Calu3 (cell line): ENCODE measurements at regions of chr5 and their contacts with region 1.

Region 1: DNA sequence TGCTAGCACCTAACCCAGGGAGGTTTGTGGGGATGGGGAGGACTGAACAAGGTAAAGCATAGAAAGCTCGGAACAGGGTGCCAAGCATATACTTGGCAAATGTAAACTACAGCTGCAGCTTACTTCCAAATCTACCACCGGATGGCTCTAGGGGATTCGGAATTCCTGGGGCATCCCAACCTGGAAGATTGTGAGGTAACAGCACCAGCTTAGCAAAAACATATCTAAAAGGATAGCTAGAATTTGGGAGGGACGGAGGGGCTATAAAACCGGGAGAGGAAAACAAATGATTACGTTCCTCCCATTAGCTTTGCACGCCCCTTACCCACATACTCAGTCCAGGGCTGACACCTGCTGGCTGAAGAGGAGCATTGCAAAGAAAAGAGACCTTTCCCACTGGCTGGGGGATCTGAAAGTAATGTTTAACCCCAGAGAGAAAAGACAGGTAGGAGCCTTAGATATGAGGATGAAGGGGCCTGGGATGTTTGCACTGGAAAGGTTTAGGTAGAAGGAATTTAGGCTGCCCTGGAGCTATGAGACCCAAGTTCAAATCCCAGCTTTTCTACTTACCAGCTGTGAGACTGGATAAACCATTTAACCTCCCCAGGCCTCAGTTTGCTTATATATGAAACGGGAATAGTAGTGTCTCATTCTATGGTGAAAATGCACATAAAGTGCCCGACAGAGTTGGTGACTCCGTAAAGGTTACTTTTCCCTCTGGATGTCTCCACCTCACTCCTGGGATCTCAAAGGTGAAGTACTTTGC is 73.6 kb downstream of the FAM114A2 start:
- DNase-seq: peak; percentile 73
- H3K4me3 Mint-ChIP-seq: no peak overlapping the region
- H3K27ac Mint-ChIP-seq: no peak overlapping the region
- H3K4me1 Mint-ChIP-seq: no peaks in the 10 kb centered on the region
- H3K27me3 Mint-ChIP-seq: peaks cover 55% of the 10 kb centered on the region
- CTCF ChIP-seq: peak; percentile 96

Region 2: DNA sequence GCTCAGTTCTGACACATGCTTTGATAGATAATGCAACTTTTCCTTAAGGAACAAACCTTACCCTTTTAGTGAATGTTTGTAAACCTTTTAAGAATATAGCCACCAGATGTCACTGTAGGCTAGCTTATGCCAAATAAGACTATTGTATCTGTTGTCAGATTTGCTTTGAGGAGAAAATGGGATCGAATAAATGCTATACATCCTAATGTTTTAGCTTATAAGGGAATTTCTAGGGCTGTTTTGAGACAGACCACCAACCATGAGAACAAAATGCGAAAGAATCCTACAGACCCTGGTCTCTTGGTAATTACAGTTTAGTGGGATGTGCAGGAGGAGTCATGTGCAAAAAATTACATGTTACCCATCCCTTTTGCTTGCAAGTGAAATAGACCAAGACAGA is 1432.3 kb before region 1 on chr5:
- CTCF ChIA-PET with region 1: interaction called, 10 read pairs
- intact Hi-C with region 1: loop called (anchors 1 kb)
- DNase-seq: peak; percentile 34
- H3K4me3 Mint-ChIP-seq: no peak overlapping the region
- H3K27ac Mint-ChIP-seq: no peak overlapping the region
- H3K4me1 Mint-ChIP-seq: no peaks in the 10 kb centered on the region
- H3K27me3 Mint-ChIP-seq: peaks cover 41% of the 10 kb centered on the region
- CTCF ChIP-seq: peak; percentile 61

Region 3: DNA sequence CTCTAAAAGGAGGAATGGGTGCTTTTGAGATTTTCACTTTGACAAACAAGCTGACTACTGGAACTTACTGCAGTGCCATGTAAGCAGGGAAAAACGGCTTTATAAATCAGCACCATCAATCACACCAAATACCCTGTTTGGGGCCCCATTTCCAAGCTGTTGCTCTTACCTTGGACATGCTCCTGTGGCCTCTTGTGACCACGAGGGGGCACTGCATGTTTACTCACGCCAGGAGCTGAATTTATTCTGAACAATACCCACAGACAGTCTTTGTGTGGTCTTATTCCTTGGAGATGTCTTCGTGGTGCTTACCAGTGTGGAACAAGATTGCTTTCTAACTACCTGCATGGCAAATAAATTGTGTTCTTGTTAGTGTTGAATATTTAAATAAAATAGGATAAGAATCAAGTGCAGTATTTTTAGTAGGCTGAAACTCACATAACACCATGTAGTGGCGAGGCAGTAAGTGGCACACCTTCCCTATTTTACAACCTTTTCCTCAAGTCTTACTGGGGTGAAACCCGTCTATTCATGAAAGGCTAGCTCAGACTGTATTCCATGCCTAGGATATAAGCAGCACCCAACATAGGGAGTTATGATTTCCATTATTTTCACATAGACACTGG is 1404.4 kb before region 1 on chr5:
- CTCF ChIA-PET with region 1: interaction called, 9 read pairs
- intact Hi-C with region 1: loop called (anchors 1 kb)
- DNase-seq: peak; percentile 75
- H3K4me3 Mint-ChIP-seq: no peak overlapping the region
- H3K27ac Mint-ChIP-seq: no peak overlapping the region
- H3K4me1 Mint-ChIP-seq: no peaks in the 10 kb centered on the region
- H3K27me3 Mint-ChIP-seq: peaks cover 21% of the 10 kb centered on the region
- CTCF ChIP-seq: peak; percentile 85

Region 4: DNA sequence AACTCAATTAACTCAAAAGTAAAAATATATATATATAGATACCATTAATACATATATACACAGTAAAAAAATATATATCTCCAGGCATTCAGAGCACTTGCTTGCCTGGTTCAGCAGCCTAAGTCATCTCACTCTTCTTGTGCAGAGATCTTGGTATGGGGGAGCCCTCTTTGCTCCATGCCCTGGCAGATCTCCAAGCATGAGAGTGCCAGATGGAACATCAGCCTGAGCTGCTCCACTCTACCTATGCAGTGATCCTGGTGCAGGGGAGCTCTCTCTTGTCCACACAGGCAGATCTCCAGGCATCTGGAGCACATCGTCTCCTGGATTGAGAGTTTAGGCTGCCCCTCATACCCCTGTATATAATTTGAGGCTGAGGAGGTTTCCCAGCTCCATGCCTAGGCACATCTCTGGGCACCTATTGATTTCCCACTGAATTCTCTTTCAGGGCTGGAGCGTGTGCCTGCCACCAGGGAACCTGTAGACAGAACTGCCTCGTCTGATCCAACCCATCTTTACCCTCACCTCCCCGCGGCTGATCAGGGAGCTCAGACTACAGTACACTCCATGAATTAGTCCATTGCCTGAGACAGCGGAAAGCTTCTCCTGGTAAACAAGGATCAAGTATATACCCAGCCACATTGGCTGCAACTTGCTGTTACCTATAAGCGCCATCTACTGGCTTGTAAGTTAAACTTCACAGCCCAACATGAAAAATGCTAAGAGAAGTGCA is 817.0 kb before region 1 on chr5:
- CTCF ChIA-PET with region 1: interaction called, 4 read pairs
- intact Hi-C with region 1: loop called (anchors 2 kb)
- DNase-seq: peak; percentile 15
- H3K4me3 Mint-ChIP-seq: no peak overlapping the region
- H3K27ac Mint-ChIP-seq: no peak overlapping the region
- H3K4me1 Mint-ChIP-seq: no peaks in the 10 kb centered on the region
- H3K27me3 Mint-ChIP-seq: no peaks in the 10 kb centered on the region
- CTCF ChIP-seq: peak; percentile 54

Region 5: GRCh38 chr5:153480401-153480800 is 484.7 kb before region 1 on chr5:
- CTCF ChIA-PET with region 1: no interaction called
- intact Hi-C with region 1: no loop called
- DNase-seq: no peak
- H3K4me3 Mint-ChIP-seq: no peak overlapping the region
- H3K27ac Mint-ChIP-seq: no peak overlapping the region
- H3K4me1 Mint-ChIP-seq: no peaks in the 10 kb centered on the region
- H3K27me3 Mint-ChIP-seq: peaks cover 19% of the 10 kb centered on the region
- CTCF ChIP-seq: no peak

Region 6: DNA sequence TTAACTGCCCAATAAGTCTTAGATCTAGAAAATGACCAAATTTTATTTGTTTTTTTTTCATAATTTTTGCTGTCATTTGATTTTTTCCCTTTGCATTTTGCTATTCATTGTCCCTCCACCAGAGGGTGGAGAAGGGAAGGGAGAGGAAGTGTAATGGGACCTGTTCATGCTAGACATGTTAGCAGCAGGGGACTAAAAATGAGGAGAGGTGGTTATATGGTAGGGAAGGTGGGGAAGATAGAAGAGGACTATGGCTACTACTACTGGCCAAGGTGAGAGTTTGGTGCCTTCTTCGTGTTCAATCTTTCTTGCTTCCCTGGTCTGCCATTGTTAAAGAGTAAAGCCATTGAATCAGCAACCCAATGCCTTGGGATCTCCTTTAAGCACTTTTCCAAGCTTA is 468.2 kb before region 1 on chr5:
- CTCF ChIA-PET with region 1: interaction called, 17 read pairs
- intact Hi-C with region 1: loop called (anchors 1 kb)
- DNase-seq: peak; percentile 36
- H3K4me3 Mint-ChIP-seq: no peak overlapping the region
- H3K27ac Mint-ChIP-seq: no peak overlapping the region
- H3K4me1 Mint-ChIP-seq: no peaks in the 10 kb centered on the region
- H3K27me3 Mint-ChIP-seq: peaks cover 64% of the 10 kb centered on the region
- CTCF ChIP-seq: peak; percentile 57

Region 7: GRCh38 chr5:153601377-153601776 is 363.7 kb before region 1 on chr5:
- CTCF ChIA-PET with region 1: no interaction called
- intact Hi-C with region 1: no loop called
- DNase-seq: no peak
- H3K4me3 Mint-ChIP-seq: no peak overlapping the region
- H3K27ac Mint-ChIP-seq: no peak overlapping the region
- H3K4me1 Mint-ChIP-seq: no peaks in the 10 kb centered on the region
- H3K27me3 Mint-ChIP-seq: peaks cover 29% of the 10 kb centered on the region
- CTCF ChIP-seq: no peak

Region 8: GRCh38 chr5:153807801-153808200 is 157.3 kb before region 1 on chr5:
- CTCF ChIA-PET with region 1: no interaction called
- intact Hi-C with region 1: no loop called
- DNase-seq: no peak
- H3K4me3 Mint-ChIP-seq: no peak overlapping the region
- H3K27ac Mint-ChIP-seq: no peak overlapping the region
- H3K4me1 Mint-ChIP-seq: no peaks in the 10 kb centered on the region
- H3K27me3 Mint-ChIP-seq: peaks cover 33% of the 10 kb centered on the region
- CTCF ChIP-seq: no peak